Prostate gland (tissue), 2 donors: ENCODE measurements at regions of chr7 and their contacts with region 1.

Region 1: GRCh38 chr7:127585044-127585953 is at the start of gene GCC1:
- DNase-seq: peak; percentile 89
- H3K4me3 ChIP-seq: peak within 1 kb of the TSS; percentile 73 to 88
- H3K27ac ChIP-seq: peak within 1 kb of the TSS; percentile 84 to 90
- H3K4me1 ChIP-seq: peaks cover 18% of the 10 kb centered on the region
- H3K27me3 ChIP-seq: no peaks in the 10 kb centered on the region
- CTCF ChIP-seq: no peak
- POLR2A ChIP-seq: peak; percentile 85
- total RNA-seq, gene GCC1: 22.5 to 32.3 TPM

Region 2: DNA sequence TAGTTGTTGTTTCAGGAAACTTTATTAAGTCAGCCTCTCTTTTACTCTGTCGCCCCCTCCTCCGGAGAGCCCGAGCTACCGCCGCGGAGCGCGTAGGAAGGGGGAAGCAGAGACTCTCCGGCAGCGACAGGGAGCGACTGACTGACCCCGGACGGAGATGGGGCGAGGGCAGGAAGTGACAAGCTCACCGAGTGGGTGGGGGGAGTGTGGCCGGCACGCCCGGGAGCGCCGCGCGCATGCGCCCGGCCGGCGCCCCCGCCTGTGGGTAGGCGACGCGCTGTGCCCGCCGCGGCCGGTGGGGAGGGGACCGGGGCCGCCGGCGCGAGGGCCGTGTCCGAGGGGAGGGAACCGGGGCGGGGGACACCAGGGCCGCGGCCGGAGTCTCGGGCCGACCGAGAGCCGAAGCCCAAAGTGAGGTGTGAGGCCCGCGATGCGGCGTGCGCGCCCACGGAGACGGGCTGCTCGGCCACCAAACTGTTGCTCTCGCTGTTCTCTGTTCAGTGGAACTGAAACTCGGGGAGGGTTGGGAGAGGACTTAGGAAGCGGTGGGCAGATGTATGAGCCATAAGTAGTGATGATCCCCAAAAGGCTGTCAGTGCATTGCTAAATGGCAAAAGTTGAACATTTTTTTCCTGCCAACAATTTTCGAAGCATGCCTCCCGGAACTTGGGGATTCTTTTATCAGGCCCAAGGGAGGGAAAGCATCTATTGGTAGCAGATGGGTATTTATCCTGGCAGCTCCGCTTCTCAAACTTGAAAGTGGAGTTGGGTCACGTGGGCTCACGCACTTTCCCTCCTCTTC is 192.5 kb before region 1 on chr7 and contains the start of gene ZNF800:
- intact Hi-C with region 1: loop called (anchors 5 kb)
- DNase-seq: peak; percentile 90
- H3K4me3 ChIP-seq: peak within 1 kb of the TSS; percentile 97
- H3K27ac ChIP-seq: peak within 1 kb of the TSS; percentile 96
- H3K4me1 ChIP-seq: no peaks in the 10 kb centered on the region
- H3K27me3 ChIP-seq: no peaks in the 10 kb centered on the region
- CTCF ChIP-seq: no peak
- POLR2A ChIP-seq: peak; percentile 91
- total RNA-seq, gene ZNF800: 29.8 to 33.9 TPM

Region 3: GRCh38 chr7:127651556-127652332 is 66.4 kb after region 1 on chr7 and contains the start of gene SND1:
- intact Hi-C with region 1: loop called (anchors 2 kb)
- DNase-seq: peak; percentile 99
- H3K4me3 ChIP-seq: peak within 1 kb of the TSS; percentile 87 to 96
- H3K27ac ChIP-seq: peak within 1 kb of the TSS; percentile 86 to 89
- H3K4me1 ChIP-seq: no peaks in the 10 kb centered on the region
- H3K27me3 ChIP-seq: no peaks in the 10 kb centered on the region
- CTCF ChIP-seq: no peak
- POLR2A ChIP-seq: peak; percentile 79
- total RNA-seq, gene SND1: 175 to 190 TPM

Region 4: DNA sequence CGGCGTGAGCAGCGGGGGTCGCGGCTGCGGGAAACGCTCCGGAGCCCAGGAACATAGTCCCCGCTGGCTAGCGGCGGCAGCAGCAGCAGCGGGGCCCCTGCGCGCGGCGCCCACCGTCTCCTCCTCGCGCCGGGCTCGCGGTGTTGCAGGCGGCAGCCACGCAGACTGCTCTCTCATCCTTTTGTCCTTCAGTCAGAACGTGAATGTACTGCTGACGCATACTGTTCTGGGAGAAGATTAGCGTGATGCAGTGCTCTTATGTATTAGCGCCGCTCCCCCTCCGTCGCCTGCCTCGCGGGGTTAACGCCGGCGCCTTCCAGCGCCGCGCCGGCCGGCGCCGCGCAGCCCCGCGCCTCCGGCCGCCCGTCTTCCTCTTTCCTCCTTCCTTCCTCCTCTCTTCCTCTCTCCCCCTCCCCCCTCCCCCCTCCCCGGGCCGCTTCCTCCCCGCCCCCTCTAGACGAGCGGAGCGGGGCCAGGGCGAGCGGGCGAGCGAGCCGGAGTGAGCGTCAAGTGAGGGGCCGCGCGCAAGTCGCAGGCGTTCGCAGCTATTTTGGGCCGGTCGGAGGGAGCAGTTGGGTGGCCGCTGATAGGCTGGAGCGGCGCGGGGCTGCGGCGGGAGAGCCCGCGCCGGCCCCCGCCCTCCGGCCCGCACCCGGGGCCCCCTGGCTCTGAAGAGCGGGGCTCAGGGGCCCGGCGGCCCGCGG is 446.8 kb after region 1 on chr7:
- intact Hi-C with region 1: loop called (anchors 10 kb)
- DNase-seq: peak; percentile 16
- H3K4me3 ChIP-seq: peak overlapping the region; percentile 35 to 38
- H3K27ac ChIP-seq: no peak overlapping the region
- H3K4me1 ChIP-seq: peaks cover 7% of the 10 kb centered on the region
- H3K27me3 ChIP-seq: no peaks in the 10 kb centered on the region
- CTCF ChIP-seq: no peak
- POLR2A ChIP-seq: no peak